PC-3 (cell line): ENCODE measurements at regions of chr5 and their contacts with region 1.

Region 1: GRCh38 chr5:113606298-113607134 is 93.0 kb downstream of the YTHDC2 start:
- DNase-seq: peak; percentile 78
- ATAC-seq: peak; percentile 95
- H3K4me3 ChIP-seq: 0 out of 2 replicates have a peak overlapping the region, but pooled peaks have one; percentile 38
- H3K27ac ChIP-seq: no peak overlapping the region
- H3K4me1 ChIP-seq: peaks cover 9% of the 10 kb centered on the region
- H3K27me3 ChIP-seq: no peaks in the 10 kb centered on the region
- CTCF ChIP-seq: peak; percentile 94

Region 2: DNA sequence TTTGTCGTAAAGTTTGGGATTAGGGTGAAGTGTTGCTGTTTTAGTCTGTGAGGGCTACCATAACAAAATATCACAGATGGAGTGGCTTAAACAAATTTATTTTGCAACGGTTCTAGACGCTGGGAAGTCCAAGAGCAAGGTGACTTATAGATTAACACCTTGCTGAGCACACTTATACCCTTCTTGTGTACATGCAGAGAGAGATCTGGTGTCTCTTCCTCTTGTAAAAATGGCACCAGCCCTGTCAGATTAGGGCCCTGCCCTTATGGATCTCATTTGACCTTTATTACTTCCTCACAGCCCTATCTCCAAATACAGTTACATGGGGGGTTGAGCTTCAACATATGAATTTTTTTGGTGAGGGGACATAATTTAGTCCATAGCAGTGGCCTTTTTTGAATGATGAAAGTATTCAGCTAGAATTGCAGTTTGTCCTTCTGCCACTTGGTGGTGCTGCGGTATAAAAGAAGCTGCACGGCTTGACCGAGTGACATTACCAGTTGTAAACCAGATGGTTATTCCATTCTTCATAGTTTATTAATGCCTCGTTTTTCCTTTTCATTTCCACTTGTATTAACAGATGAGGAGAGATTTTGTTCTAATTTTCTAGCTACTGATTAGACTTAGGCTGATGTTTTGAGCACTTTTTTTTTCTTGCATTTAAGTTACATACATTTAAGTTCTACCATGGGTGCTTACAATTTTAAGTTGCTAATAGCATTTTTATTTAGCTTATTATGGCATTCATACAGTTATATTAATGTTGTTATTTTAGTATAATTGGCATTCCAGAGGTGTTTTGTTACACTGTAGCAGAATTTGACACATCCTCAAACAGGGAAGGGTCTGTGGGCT is 610.5 kb before region 1 on chr5:
- CTCF ChIA-PET with region 1: no interaction called
- POLR2A ChIA-PET with region 1: no interaction called
- intact Hi-C with region 1: loop called (anchors 1 kb)
- DNase-seq: peak; percentile 90
- ATAC-seq: peak; percentile 78
- H3K4me3 ChIP-seq: no peak overlapping the region
- H3K27ac ChIP-seq: no peak overlapping the region
- H3K4me1 ChIP-seq: peaks cover 11% of the 10 kb centered on the region
- H3K27me3 ChIP-seq: no peaks in the 10 kb centered on the region
- CTCF ChIP-seq: peak; percentile 97

Region 3: DNA sequence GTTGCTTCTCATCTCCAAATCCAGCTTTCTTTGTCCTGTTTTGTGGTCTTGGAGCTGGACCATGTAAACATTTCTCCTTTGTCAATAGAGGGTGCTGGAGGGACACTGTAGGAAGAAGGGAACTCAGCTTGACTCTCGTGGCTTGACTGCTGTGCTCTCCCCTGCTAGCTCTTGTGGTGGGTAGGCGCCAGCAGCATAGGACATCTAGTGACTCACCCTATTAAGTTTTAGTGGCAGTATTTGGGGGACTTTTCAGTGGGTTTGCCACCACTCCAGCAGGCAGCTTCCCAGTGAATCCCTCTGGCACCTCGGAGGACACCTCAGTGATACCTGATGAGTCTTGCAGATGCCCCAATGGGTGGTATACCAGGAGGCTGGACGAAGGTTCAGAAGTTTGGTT is 269.5 kb before region 1 on chr5:
- CTCF ChIA-PET with region 1: interaction called, 3 read pairs
- POLR2A ChIA-PET with region 1: no interaction called
- intact Hi-C with region 1: loop called (anchors 1 kb)
- DNase-seq: peak; percentile 72
- ATAC-seq: peak; percentile 91
- H3K4me3 ChIP-seq: no peak overlapping the region
- H3K27ac ChIP-seq: no peak overlapping the region
- H3K4me1 ChIP-seq: no peaks in the 10 kb centered on the region
- H3K27me3 ChIP-seq: no peaks in the 10 kb centered on the region
- CTCF ChIP-seq: peak; percentile 78